ENCODE measurements at regions of chr6 and their contacts with region 1.

Region 1: DNA sequence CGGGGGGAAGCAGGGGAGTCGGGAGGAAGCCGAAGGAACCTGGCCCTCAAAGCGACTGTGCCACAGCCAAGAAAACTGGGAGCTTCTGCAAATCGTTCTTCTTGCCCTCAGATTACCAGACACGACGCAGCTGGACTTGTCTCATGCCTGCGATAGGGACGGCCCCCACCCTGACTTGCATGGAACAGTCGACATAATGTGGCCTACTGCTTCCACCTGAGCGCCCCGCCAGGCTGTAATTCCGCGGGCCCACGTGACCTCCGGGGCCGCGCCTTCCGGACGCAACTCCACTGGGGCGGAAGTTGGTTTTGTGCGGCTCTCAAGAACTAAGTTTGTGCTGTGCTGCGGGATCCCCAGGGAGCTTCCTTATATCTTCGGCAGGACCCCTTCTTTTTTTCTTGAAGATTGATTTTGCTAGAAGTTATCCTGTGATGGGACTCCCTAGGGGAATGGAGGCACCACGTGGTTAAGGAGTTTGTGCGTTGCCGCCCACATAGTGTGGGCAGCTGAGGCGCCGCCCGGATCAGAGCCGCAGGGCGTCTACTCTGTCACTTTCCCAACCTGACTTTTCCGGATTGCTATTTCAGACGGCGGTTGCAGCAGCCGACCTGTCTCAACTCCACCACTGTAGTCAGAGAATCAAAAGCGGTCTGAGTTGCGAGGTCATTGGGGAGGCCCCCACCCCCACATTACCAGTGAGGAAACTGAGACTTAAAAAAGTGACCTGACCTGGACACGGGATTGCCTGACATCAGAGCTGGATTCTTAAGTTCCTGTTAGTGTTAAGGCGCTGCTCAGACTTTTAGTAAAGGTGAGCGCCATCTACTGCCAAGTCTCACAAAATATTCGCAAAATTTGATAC is 540 bp upstream of the CD164 start:
- DNase-seq: peak; percentile 88 to 89
- H3K4me3 ChIP-seq: peak overlapping the region; percentile 77
- H3K27ac ChIP-seq: peak overlapping the region; percentile 93
- H3K4me1 ChIP-seq: peaks cover 43% of the 10 kb centered on the region
- H3K27me3 ChIP-seq: no peaks in the 10 kb centered on the region
- CTCF ChIP-seq: peak; percentile 82

Region 2: GRCh38 chr6:108558372-108559096 is 824.3 kb before region 1 on chr6:
- CTCF ChIA-PET with region 1: no interaction called
- POLR2A ChIA-PET with region 1: interaction called, 3 read pairs
- intact Hi-C with region 1: loop called (anchors 5 kb)
- DNase-seq: peak; percentile 95 to 96
- H3K4me3 ChIP-seq: peak overlapping the region; percentile 99
- H3K27ac ChIP-seq: peak overlapping the region; percentile 83
- H3K4me1 ChIP-seq: peaks cover 12% of the 10 kb centered on the region
- H3K27me3 ChIP-seq: no peaks in the 10 kb centered on the region
- CTCF ChIP-seq: no peak

Region 3: DNA sequence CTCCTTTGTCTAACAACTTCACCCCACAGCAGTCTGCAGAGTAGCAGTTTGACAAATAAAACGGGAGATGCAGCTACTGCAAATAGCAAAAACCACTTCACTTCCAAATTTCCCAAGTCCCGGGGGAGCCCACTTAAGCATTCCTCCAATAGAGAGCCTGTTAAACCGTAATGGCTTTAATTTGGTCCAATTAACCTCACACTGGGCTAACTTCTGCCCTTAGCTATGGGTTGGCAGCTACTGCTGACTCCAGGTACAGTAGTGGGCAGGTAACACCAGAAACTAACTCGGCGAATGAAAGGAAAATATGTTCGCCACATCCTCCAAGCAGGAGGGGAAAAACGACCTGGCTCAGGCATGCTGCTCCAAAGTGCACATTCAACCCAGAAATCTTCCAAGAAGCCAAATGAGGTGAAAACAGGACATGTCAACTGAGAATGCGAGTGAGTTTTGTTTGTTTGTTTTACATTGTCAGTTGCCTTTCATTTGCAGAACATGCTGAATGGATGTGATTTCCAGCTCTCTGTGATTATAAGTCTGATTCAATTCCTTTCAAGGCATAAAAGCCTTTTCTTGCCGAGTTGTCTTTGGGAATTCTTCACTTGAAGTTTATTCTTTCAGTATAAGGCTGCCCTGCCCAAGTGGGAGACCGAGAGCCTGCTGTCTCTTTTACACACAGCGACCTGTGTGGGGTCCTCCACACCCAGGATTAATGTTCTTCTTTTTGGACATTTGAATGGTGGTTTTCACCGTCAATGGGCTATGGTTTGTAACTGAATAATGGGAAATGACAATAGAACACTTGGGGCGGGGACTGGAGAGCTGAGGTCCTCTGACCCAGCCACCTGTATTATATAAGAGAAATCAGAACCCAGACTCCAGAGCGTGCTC is 651.9 kb before region 1 on chr6:
- CTCF ChIA-PET with region 1: no interaction called
- POLR2A ChIA-PET with region 1: no interaction called
- intact Hi-C with region 1: no loop called
- DNase-seq: no peak
- H3K4me3 ChIP-seq: peak overlapping the region; percentile 46; the same call in 1 of the 2 replicates
- H3K27ac ChIP-seq: peak overlapping the region; percentile 84
- H3K4me1 ChIP-seq: peaks cover 59% of the 10 kb centered on the region
- H3K27me3 ChIP-seq: no peaks in the 10 kb centered on the region
- CTCF ChIP-seq: no peak

Region 4: GRCh38 chr6:109095027-109095834 is 287.6 kb before region 1 on chr6 and contains the start of gene CEP57L1:
- CTCF ChIA-PET with region 1: interaction called, 4 read pairs
- POLR2A ChIA-PET with region 1: interaction called, 6 read pairs
- intact Hi-C with region 1: loop called (anchors 1 kb)
- DNase-seq: peak; percentile 90 to 94
- H3K4me3 ChIP-seq: peak within 1 kb of the TSS; percentile 80
- H3K27ac ChIP-seq: peak within 1 kb of the TSS; percentile 90
- H3K4me1 ChIP-seq: peaks cover 36% of the 10 kb centered on the region
- H3K27me3 ChIP-seq: no peaks in the 10 kb centered on the region
- CTCF ChIP-seq: no peak
- total RNA-seq, gene CEP57L1: 17.2 and 18.3 TPM in 2 replicates

Region 5: GRCh38 chr6:109344206-109344605 is 38.6 kb before region 1 on chr6:
- CTCF ChIA-PET with region 1: no interaction called
- POLR2A ChIA-PET with region 1: no interaction called
- intact Hi-C with region 1: loop called (anchors 5 kb)
- DNase-seq: peak; percentile 72 to 86
- H3K4me3 ChIP-seq: no peak overlapping the region
- H3K27ac ChIP-seq: peak overlapping the region; percentile 23
- H3K4me1 ChIP-seq: peaks cover 25% of the 10 kb centered on the region
- H3K27me3 ChIP-seq: no peaks in the 10 kb centered on the region
- CTCF ChIP-seq: no peak

Region 6: DNA sequence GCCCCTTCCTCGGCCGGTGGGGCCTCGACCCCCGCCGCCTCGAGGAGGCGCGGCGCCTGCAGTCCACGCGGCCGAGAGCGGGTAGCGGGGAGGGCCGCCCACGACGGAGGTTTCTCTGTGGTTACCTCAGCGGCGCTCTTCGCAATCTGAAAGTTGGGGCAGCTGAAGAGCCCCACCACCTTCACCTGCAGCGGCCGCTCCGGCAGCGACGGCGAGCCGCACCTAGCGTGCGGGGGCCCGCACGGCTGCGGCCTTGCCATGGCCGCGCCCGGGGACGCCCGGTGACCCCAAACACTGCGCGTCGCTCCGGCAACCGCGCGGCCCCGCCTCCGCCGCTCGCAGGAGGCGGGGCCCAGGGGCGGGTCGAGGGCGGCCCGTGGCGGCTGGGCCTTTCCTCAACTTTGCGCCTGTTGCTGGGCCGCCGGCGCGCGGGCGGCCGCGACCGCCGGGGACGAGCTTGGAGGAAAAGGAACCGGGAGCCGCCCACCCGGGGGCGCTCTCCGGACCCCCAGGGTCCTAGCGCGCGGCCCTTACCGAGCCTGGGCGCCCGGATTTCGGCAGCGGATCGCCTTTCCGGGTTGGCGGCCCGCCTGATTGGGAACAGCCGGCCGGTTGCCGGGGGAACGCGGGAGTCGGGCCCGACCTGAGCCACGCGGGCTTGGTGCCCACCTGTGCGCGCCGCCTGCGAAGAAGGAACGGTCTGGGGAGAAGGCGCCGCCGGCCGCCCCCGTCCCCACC is 57.7 kb after region 1 on chr6 and contains the starts of genes PPIL6 and SMPD2:
- CTCF ChIA-PET with region 1: interaction called, 3 read pairs
- POLR2A ChIA-PET with region 1: no interaction called
- intact Hi-C with region 1: loop called (anchors 1 kb)
- DNase-seq: peak; percentile 69 to 88
- H3K4me3 ChIP-seq: peak within 1 kb of the TSS; percentile 92
- H3K27ac ChIP-seq: peak within 1 kb of the TSS; percentile 81
- H3K4me1 ChIP-seq: peaks cover 18% of the 10 kb centered on the region
- H3K27me3 ChIP-seq: no peaks in the 10 kb centered on the region
- CTCF ChIP-seq: peak; percentile 56
- total RNA-seq, gene PPIL6: 13.0 and 15.5 TPM in 2 replicates
- total RNA-seq, gene SMPD2: 8.2 and 10.3 TPM in 2 replicates

Region 7: GRCh38 chr6:109482905-109483735 is 100.3 kb after region 1 on chr6 and contains the start of gene ZBTB24:
- CTCF ChIA-PET with region 1: no interaction called
- POLR2A ChIA-PET with region 1: interaction called, 4 read pairs
- intact Hi-C with region 1: loop called (anchors 2 kb)
- DNase-seq: peak; percentile 79 to 90
- H3K4me3 ChIP-seq: peak within 1 kb of the TSS; percentile 75
- H3K27ac ChIP-seq: peak within 1 kb of the TSS; percentile 10; the same call in 1 of the 2 replicates
- H3K4me1 ChIP-seq: peaks cover 53% of the 10 kb centered on the region
- H3K27me3 ChIP-seq: no peaks in the 10 kb centered on the region
- CTCF ChIP-seq: no peak
- total RNA-seq, gene ZBTB24: 5.4 and 7.2 TPM in 2 replicates

Region 8: DNA sequence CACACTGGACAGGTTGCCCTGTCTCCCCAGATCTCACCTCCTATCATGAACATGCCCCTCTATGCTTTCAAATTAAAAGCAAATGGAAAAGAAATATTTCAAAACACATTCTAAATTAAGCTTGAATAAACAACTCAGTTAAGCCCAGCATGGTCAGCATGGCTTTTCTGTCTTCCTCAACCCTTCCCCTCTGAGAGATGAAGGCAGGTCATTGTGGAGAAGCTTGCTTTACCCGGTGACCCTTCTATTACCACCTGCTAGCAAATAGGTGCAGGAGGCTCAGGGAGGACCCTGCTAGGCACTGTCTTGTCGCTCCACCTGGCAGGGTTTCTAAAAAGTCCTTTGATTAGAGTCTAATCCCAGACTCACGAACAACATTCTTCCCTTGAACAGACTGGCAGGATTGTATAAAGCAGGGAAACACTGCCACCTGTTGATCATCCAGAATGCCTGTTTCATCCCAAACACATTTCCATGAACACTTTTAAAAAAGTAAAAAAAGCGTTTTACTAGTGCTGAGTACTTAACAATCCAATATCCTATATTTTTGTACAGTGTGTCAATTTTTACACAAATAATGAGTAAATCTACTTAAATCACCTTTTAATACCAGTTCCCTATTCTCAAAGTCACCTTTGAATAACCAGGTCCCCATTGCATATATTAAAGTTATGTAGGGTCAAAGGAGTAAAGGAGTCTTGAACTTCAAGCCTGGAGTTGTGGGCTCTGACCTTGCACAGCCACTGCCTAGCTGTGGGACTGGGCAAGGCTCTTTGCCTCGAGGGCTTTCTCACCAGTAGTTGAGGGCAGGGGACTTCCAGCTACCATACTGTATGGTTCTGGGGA is 670.8 kb after region 1 on chr6:
- CTCF ChIA-PET with region 1: no interaction called
- POLR2A ChIA-PET with region 1: no interaction called
- intact Hi-C with region 1: loop called (anchors 10 kb)
- DNase-seq: peak; percentile 9 to 48
- H3K4me3 ChIP-seq: no peak overlapping the region
- H3K27ac ChIP-seq: no peak overlapping the region
- H3K4me1 ChIP-seq: no peaks in the 10 kb centered on the region
- H3K27me3 ChIP-seq: peaks cover 24% of the 10 kb centered on the region
- CTCF ChIP-seq: peak; percentile 88